ENCODE measurements at regions of chr4 and their contacts with region 1.

Region 1: DNA sequence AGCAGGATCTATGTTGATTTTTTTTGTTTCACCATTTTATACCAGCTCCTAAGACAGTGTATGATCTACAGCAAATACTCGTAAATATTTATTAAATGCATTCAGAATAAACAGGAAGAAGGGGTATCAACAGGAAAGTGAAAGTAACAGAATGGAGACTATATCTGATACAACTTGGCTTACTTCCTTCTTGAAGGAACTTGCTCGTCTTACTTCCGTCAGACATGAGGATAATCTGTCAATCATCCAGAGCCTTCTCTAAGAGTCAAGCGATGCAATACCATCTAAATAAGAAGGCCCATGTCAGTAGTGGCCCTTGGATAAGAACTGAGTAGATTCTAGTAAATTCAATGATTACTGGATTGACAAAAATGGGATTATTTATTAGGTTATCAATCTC is 84.2 kb downstream of the CAMK2D start:
- DNase-seq: no peak
- H3K4me3 Mint-ChIP-seq: no peak overlapping the region
- H3K27ac Mint-ChIP-seq: peak overlapping the region; percentile 52
- H3K4me1 Mint-ChIP-seq: peaks cover 38% of the 10 kb centered on the region
- H3K27me3 Mint-ChIP-seq: no peaks in the 10 kb centered on the region

Region 2: DNA sequence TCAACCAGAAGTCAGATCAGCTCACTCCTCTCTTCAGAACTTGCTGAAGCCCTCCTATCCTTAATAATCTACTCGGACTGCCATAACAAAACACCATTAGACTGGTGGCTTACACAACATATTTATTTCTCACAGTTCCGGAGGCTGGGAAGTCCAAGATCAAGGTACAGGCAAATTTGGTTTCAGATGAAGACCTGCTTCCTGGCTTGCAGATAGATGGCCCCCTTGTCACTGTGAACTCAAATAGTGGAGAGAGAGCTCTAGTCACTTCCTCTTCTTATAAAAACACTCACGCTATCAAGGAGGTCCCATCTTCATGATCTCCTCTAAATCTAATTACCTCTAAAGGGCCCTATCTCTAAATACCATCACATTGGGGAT is 40.9 kb before region 1 on chr4:
- CTCF ChIA-PET with region 1: no interaction called
- POLR2A ChIA-PET with region 1: interaction called, 10 read pairs
- DNase-seq: peak; percentile 17
- H3K4me3 Mint-ChIP-seq: peak overlapping the region; percentile 41
- H3K27ac Mint-ChIP-seq: peak overlapping the region; percentile 70
- H3K4me1 Mint-ChIP-seq: peaks cover 41% of the 10 kb centered on the region
- H3K27me3 Mint-ChIP-seq: no peaks in the 10 kb centered on the region

Region 3: DNA sequence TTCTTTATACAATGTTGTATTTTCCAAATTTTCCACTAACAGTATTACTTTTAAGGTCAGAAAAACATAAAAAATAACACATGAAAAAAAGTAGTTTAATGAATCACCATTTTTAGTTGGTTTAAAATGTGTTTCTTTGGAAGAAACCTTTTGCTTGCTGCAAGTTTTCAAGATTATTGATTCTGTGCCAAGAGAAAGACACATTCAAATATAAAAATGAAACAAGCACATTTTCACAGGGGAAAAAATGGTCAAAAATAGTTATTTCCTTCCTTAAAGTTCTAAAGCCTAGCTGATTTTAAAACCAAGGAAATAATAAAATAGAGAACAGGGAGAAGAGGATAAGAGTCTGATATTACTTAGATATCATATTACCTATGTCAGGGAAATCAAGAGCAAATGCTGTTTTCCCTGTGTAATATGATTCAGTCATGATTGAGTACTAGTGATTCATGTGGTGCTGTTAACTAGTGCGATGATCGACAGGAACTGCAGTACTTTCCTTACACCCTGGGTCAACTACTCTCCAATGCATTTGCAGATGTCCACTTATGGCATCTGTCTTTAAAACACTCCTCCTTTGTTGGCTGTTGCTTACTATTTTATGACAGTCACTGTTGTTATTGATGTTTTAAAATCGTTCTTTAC is 19.6 kb before region 1 on chr4:
- CTCF ChIA-PET with region 1: no interaction called
- POLR2A ChIA-PET with region 1: no interaction called
- DNase-seq: no peak
- H3K4me3 Mint-ChIP-seq: no peak overlapping the region
- H3K27ac Mint-ChIP-seq: no peak overlapping the region
- H3K4me1 Mint-ChIP-seq: peaks cover 8% of the 10 kb centered on the region
- H3K27me3 Mint-ChIP-seq: no peaks in the 10 kb centered on the region

Region 4: DNA sequence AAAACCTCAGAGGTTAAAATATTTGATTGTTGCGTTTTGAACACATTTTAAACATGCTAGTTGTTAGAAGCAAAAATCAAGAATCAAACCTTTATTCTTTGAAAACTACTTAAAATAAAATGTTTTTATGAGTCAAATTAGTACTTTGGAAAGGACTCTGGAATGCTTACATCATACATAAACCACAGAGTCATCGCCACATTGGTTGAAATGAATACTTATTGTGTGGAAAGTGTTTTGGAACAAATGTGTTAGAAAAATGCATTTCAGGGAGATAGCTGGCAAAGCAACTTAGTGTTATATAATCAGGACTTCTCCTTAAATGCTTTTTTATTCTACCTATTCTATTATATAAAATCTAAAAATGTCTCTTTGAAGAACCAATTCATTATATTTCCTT is 133.6 kb after region 1 on chr4:
- CTCF ChIA-PET with region 1: no interaction called
- POLR2A ChIA-PET with region 1: no interaction called
- DNase-seq: no peak
- H3K4me3 Mint-ChIP-seq: no peak overlapping the region
- H3K27ac Mint-ChIP-seq: no peak overlapping the region
- H3K4me1 Mint-ChIP-seq: no peaks in the 10 kb centered on the region
- H3K27me3 Mint-ChIP-seq: no peaks in the 10 kb centered on the region

Region 5: DNA sequence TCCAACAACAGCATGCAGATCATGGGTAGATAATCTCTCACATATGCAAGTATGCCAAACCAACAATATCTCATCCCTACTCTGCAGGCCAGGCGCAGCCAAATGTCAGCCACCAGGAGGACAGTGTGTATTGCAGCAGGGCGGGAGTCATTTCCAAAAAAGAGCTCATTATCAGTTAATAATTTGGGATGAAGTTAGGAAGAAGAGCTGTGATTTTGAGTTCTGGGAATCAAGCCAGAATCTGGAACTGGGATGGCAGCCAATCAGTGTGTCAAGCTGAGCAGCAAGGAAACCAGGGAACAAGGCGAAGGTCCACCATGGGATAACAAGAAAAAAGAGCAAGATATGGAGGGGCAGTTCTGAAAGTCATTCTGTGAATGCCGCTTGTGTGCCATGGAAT is 172.4 kb after region 1 on chr4:
- CTCF ChIA-PET with region 1: no interaction called
- POLR2A ChIA-PET with region 1: no interaction called
- DNase-seq: no peak
- H3K4me3 Mint-ChIP-seq: no peak overlapping the region
- H3K27ac Mint-ChIP-seq: no peak overlapping the region
- H3K4me1 Mint-ChIP-seq: no peaks in the 10 kb centered on the region
- H3K27me3 Mint-ChIP-seq: no peaks in the 10 kb centered on the region

Region 6: GRCh38 chr4:113921089-113921794 is 243.9 kb after region 1 on chr4:
- CTCF ChIA-PET with region 1: no interaction called
- POLR2A ChIA-PET with region 1: no interaction called
- DNase-seq: no peak
- H3K4me3 Mint-ChIP-seq: no peak overlapping the region
- H3K27ac Mint-ChIP-seq: no peak overlapping the region
- H3K4me1 Mint-ChIP-seq: peaks cover 3% of the 10 kb centered on the region
- H3K27me3 Mint-ChIP-seq: no peaks in the 10 kb centered on the region